Caco-2 (cell line): ENCODE measurements at regions of chr2 and their contacts with region 1.

Region 1: DNA sequence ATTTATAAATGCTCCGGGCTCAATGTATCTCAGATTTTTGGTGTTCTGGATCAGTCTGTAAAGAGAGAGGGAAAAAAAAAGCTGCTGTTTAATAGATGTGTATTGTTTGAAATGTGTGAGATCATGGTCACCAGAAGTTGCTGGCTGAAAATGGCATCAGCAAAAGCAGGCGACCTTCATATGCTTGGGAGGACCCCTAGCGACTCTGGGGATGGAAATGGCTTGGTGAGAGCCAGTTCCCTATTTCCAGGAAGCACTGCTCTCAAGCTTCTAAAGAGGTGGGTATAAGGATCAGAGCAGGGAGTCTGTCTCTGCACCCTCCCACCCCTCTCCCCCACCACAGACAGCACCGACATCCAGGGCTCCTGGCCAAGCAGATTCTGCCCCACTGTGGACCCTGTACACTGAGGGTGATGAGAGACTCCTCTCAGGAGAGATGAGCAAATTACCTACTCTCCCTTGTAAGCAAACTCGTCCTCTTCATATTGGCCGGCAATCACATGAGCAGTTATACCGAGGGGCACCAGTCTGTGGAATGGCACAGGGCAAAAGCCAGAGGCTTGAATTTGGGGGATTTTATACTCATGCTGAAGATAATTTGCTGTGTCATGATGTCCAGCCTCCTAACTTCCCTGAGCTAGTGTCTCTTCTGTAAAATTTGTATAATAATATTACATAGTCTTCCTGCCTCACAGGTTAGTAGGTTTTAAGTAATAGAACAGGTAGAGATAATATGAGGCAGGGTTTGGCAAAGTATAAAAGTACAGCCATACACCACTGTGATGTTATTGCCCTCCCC is 29.6 kb downstream of the LHCGR start:
- DNase-seq: peak; percentile 25 to 41
- H3K4me3 ChIP-seq: no peak overlapping the region
- H3K4me3 Mint-ChIP-seq: no peak overlapping the region
- H3K27ac Mint-ChIP-seq: no peak overlapping the region
- H3K4me1 ChIP-seq: no peaks in the 10 kb centered on the region
- H3K4me1 Mint-ChIP-seq: no peaks in the 10 kb centered on the region
- H3K27me3 ChIP-seq: no peaks in the 10 kb centered on the region
- H3K27me3 Mint-ChIP-seq: peaks cover 3% of the 10 kb centered on the region
- CTCF ChIP-seq: peak in 1 of 2 experiments; percentile 53

Region 2: GRCh38 chr2:48617618-48618017 is 108.3 kb before region 1 on chr2 and contains the start of gene GTF2A1L:
- CTCF ChIA-PET with region 1: no interaction called
- POLR2A ChIA-PET with region 1: no interaction called
- intact Hi-C with region 1: loop called (anchors 1 kb)
- DNase-seq: no peak
- H3K4me3 ChIP-seq: no peak within 1 kb of the TSS
- H3K4me3 Mint-ChIP-seq: no peak within 1 kb of the TSS
- H3K27ac Mint-ChIP-seq: no peak within 1 kb of the TSS
- H3K4me1 ChIP-seq: no peaks in the 10 kb centered on the region
- H3K4me1 Mint-ChIP-seq: no peaks in the 10 kb centered on the region
- H3K27me3 ChIP-seq: no peaks in the 10 kb centered on the region
- H3K27me3 Mint-ChIP-seq: peaks cover 5% of the 10 kb centered on the region
- CTCF ChIP-seq: no peak
- total RNA-seq, gene GTF2A1L: not detected in 2 replicates